Activated CD8-positive, alpha-beta T cell treated with anti-CD3 and anti-CD28 coated beads, Interleukin-2, amount 10 ng/mL, durations not matched to agents 7 days and 5 days (primary cell): ENCODE measurements at regions of chr6 and their contacts with region 1.

Region 1: GRCh38 chr6:158644231-158645063 is at the start of gene DYNLT1:
- DNase-seq: peak; percentile 91
- ATAC-seq: peak; percentile 74
- H3K4me3 Mint-ChIP-seq: peak within 1 kb of the TSS; percentile 99
- H3K27ac Mint-ChIP-seq: peak within 1 kb of the TSS; percentile 97
- H3K4me1 Mint-ChIP-seq: peaks cover 71% of the 10 kb centered on the region
- H3K27me3 Mint-ChIP-seq: no peaks in the 10 kb centered on the region
- total RNA-seq, gene DYNLT1: 79.0 to 86.4 TPM

Region 2: GRCh38 chr6:158631678-158632537 is 12.5 kb before region 1 on chr6:
- CTCF ChIA-PET with region 1: interaction called, 4 read pairs
- POLR2A ChIA-PET with region 1: interaction called, 16 read pairs
- DNase-seq: peak; percentile 18
- ATAC-seq: no peak
- H3K4me3 Mint-ChIP-seq: no peak overlapping the region
- H3K27ac Mint-ChIP-seq: peak overlapping the region; percentile 61
- H3K4me1 Mint-ChIP-seq: peaks cover 59% of the 10 kb centered on the region
- H3K27me3 Mint-ChIP-seq: no peaks in the 10 kb centered on the region